ENCODE measurements at regions of chr18 and their contacts with region 1.

Region 1: GRCh38 chr18:11872479-11873136 is 21.4 kb downstream of the CHMP1B start:
- DNase-seq: no peak
- H3K4me3 ChIP-seq: no peak overlapping the region
- H3K27ac ChIP-seq: no peak overlapping the region
- H3K4me1 ChIP-seq: no peaks in the 10 kb centered on the region
- H3K27me3 ChIP-seq: no peaks in the 10 kb centered on the region
- CTCF ChIP-seq: peak; percentile 14 to 58

Region 2: DNA sequence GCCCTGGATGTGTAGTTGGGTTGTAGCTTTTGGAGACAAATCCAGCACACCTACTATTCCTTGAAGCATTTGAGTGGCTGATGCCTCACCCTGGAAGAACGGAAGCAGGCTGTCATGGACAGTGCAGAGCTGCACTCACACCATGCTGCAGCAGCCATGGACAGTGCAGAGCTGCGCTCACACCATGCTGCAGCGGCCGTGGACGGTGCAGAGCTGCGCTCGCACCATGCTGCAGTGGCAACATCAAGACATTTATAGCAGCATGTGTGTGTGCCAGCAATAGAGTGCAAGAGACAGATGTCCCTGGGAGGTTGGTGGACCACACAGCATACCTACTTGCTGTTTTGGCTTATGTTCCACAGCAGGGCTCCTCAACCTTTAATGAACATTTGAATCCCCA is 153.0 kb before region 1 on chr18:
- CTCF ChIA-PET with region 1: no interaction called
- dilution Hi-C with region 1: no loop called
- in situ Hi-C with region 1: no loop called
- intact Hi-C with region 1: no loop called
- DNase-seq: no peak
- H3K4me3 ChIP-seq: no peak overlapping the region
- H3K27ac ChIP-seq: no peak overlapping the region
- H3K4me1 ChIP-seq: no peaks in the 10 kb centered on the region
- H3K27me3 ChIP-seq: no peaks in the 10 kb centered on the region
- CTCF ChIP-seq: no peak

Region 3: GRCh38 chr18:11902522-11903292 is 30.1 kb after region 1 on chr18:
- CTCF ChIA-PET with region 1: no interaction called
- dilution Hi-C with region 1: loop called (anchors 5 kb)
- in situ Hi-C with region 1: no loop called
- intact Hi-C with region 1: no loop called
- DNase-seq: no peak
- H3K4me3 ChIP-seq: no peak overlapping the region
- H3K27ac ChIP-seq: no peak overlapping the region
- H3K4me1 ChIP-seq: no peaks in the 10 kb centered on the region
- H3K27me3 ChIP-seq: no peaks in the 10 kb centered on the region
- CTCF ChIP-seq: no peak